WTC11 (cell line): ENCODE measurements at regions of chr17 and their contacts with region 1.

Region 1: DNA sequence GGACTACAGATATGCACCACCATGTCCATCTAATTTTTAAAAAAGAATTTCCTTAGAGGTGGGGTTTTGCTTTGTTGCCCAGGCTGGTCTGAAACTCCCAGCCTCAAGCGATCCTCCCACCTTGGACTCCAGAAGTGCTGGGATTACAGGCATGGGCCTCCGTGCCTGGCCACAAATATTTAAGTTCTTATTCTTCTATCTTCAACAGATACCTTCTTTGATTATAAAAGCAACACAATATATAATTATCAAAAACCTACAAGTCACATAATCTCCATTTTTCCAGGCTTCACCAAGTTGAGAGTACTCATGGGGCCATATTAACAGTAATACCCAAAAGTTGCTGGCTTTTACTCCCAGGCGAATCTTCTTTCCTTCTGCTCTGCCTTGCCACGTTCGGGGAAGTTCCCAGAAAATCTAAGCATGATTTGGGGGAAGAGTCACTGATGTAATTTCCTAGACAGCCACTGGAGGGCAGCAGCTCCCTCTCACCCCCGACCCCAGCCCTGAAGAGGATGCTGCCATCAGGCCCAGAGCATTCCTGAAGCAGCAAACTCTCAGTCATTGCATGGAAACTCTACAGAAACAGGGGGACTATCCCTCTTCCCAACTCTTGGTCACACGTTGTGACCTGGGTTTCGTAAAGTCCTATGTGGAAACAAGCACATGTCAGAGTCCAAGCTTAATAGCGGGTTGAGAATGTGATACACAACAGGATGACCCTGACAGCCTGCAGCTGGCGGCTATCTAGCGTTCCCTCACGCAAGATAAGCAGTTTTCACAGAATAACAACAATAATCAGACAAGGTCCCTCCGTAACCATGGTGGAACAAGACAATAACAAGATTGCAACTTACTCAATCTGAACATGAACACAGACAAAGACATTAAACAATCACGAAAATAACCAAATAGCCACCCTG is 43.9 kb upstream of the DHX40 start:
- DNase-seq: peak; percentile 81
- ATAC-seq: peak; percentile 96
- H3K4me3 Mint-ChIP-seq: no peak overlapping the region
- H3K27ac Mint-ChIP-seq: peak overlapping the region; percentile 66
- H3K4me1 Mint-ChIP-seq: no peaks in the 10 kb centered on the region
- H3K27me3 Mint-ChIP-seq: no peaks in the 10 kb centered on the region
- CTCF ChIP-seq: peak; percentile 77

Region 2: GRCh38 chr17:59311130-59311920 is 210.1 kb before region 1 on chr17:
- CTCF ChIA-PET with region 1: interaction called, 10 read pairs
- POLR2A ChIA-PET with region 1: no interaction called
- DNase-seq: peak; percentile 18
- ATAC-seq: peak; percentile 96
- H3K4me3 Mint-ChIP-seq: no peak overlapping the region
- H3K27ac Mint-ChIP-seq: no peak overlapping the region
- H3K4me1 Mint-ChIP-seq: no peaks in the 10 kb centered on the region
- H3K27me3 Mint-ChIP-seq: no peaks in the 10 kb centered on the region
- CTCF ChIP-seq: peak; percentile 67

Region 3: GRCh38 chr17:59558977-59559376 is 37.5 kb after region 1 on chr17:
- CTCF ChIA-PET with region 1: interaction called, 12 read pairs
- POLR2A ChIA-PET with region 1: no interaction called
- DNase-seq: no peak
- ATAC-seq: no peak
- H3K4me3 Mint-ChIP-seq: no peak overlapping the region
- H3K27ac Mint-ChIP-seq: no peak overlapping the region
- H3K4me1 Mint-ChIP-seq: no peaks in the 10 kb centered on the region
- H3K27me3 Mint-ChIP-seq: peaks cover 15% of the 10 kb centered on the region
- CTCF ChIP-seq: no peak